ENCODE measurements at regions of chr11 and their contacts with region 1.

Region 1: DNA sequence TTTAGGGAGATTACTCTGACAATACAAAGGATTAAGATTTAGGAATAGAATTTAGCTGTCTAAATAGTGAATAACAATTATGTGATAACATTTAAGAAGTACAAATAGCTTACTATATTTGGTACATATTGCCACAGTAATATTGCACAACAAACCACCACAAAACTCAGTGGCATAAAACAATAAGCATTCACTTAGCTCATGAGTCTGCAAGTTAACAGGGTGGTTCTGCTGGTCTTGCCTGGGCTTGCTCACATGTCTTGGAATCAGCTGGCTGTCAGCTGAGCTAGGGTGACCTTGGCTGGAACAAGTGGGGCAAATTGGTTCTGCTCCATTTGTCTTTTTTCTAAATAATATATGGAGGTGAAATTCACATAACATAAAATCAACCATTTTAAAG is 115.1 kb downstream of the DCDC1 start:
- DNase-seq: no peak
- H3K4me3 ChIP-seq: no peak overlapping the region
- H3K27ac ChIP-seq: no peak overlapping the region
- H3K4me1 ChIP-seq: no peaks in the 10 kb centered on the region
- H3K27me3 ChIP-seq: peaks cover 0 to under 1% of the 10 kb centered on the region in 2 experiments
- CTCF ChIP-seq: no peak
- POLR2A ChIP-seq: no peak

Region 2: DNA sequence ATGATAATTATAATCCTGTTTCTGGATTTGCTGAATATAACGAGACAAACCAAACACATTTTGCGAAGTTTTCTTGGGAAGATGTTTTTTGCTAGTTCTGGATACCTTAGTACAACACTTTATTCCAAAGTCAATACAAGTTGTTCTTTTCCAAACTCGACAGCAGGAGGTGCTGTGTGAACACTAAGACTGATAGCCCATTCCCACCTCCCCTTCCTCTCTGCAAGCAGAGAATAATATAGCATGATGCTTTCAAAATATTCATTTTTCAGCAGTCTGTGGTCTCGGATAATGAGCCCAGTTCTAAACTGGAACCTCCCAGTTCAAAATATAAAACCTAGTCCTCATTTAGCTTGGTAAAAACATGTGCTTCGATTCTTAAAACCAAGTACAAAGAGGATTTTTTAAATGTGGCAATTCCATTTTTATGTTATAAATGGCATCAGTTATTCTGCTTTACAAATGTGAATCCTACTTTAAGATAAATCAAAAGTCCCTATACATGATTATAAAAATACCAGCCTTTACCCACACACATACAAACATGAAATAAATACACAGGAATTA is 14.0 kb before region 1 on chr11:
- CTCF ChIA-PET with region 1: interaction called, 24 read pairs
- POLR2A ChIA-PET with region 1: no interaction called
- dilution Hi-C with region 1: no loop called
- intact Hi-C with region 1: no loop called
- DNase-seq: peak; percentile 51
- H3K4me3 ChIP-seq: no peak overlapping the region
- H3K27ac ChIP-seq: no peak overlapping the region
- H3K4me1 ChIP-seq: no peaks in the 10 kb centered on the region
- H3K27me3 ChIP-seq: no peaks in the 10 kb centered on the region
- CTCF ChIP-seq: peak; percentile 38 to 51
- POLR2A ChIP-seq: no peak

Region 3: GRCh38 chr11:31264834-31265233 is 10.4 kb after region 1 on chr11:
- CTCF ChIA-PET with region 1: no interaction called
- POLR2A ChIA-PET with region 1: no interaction called
- dilution Hi-C with region 1: no loop called
- intact Hi-C with region 1: no loop called
- DNase-seq: no peak
- H3K4me3 ChIP-seq: no peak overlapping the region
- H3K27ac ChIP-seq: no peak overlapping the region
- H3K4me1 ChIP-seq: no peaks in the 10 kb centered on the region
- H3K27me3 ChIP-seq: peaks cover 0 to 2% of the 10 kb centered on the region in 2 experiments
- CTCF ChIP-seq: no peak
- POLR2A ChIP-seq: no peak